ENCODE measurements at regions of chr19 and their contacts with region 1.

Region 1: DNA sequence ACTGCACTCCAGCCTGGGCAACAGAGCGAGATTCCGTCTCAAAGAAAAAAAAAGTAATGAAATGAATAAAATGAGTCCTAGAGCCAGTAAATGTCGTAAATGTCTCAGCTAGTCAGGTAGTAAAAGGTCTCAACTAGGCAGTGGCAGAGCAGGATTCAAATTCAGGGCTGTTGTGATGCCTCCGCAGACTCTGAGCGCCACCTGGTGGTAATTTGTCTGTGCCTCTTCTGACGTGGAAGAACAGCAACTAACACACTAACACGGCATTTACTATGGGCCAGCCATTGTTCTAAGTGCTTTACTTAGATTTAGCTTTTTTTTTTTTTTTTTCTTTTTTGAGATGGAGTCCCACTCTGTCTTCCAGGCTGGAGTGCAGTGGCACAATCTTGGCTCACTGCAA is 30.2 kb downstream of the CYP2F1 start:
- DNase-seq: no peak
- H3K4me3 ChIP-seq: no peak overlapping the region
- H3K27me3 ChIP-seq: no peaks in the 10 kb centered on the region
- CTCF ChIP-seq: peak; percentile 82

Region 2: DNA sequence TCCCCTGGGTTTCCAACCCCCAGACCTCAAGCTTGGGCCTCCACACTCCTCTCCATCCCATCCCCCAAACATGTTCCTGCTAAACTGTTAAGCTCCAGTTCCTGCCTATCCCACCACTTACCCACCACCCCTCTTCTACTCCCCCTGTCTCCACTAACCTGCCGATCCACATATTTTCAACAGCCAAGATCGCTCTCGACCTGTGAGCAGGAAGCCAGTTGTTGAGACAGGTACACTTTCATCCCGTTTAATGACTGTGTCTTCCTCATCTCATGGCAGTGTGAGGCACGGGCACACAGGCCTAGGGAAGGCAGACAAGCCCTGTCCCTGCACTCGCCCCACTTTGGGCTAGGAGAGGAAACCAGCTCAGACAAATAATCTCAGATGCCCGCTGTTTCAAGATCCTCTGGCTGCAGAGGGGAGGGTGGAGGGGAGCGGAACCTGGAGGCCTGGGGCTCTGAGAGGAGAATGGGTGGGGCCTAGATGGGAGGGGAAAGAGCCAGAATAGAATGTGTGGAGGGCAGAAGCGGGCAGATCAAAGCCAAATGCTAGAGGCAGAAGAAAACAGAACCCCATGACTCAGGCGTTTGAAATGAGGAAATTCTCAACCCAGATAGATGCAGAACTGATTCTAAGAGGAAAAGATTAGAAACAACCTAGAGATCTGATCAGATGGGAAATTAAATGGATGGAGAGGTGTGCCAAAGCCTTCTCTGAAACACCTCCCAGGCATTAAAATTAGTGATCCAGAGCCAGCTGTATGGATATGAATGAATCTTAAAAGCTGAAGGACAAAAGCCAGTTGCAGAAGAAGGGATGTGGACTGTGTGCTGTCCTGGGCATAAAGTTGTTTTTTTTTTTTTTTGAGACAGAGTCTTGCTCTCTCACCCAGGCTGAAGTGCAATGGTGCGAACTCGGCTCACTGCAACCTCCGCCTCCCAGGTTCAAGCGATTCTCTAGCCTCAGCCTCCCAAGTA is 31.7 kb after region 1 on chr19:
- CTCF ChIA-PET with region 1: interaction called, 12 read pairs
- POLR2A ChIA-PET with region 1: no interaction called
- DNase-seq: peak; percentile 38
- H3K4me3 ChIP-seq: no peak overlapping the region
- H3K27me3 ChIP-seq: no peaks in the 10 kb centered on the region
- CTCF ChIP-seq: no peak

Region 3: DNA sequence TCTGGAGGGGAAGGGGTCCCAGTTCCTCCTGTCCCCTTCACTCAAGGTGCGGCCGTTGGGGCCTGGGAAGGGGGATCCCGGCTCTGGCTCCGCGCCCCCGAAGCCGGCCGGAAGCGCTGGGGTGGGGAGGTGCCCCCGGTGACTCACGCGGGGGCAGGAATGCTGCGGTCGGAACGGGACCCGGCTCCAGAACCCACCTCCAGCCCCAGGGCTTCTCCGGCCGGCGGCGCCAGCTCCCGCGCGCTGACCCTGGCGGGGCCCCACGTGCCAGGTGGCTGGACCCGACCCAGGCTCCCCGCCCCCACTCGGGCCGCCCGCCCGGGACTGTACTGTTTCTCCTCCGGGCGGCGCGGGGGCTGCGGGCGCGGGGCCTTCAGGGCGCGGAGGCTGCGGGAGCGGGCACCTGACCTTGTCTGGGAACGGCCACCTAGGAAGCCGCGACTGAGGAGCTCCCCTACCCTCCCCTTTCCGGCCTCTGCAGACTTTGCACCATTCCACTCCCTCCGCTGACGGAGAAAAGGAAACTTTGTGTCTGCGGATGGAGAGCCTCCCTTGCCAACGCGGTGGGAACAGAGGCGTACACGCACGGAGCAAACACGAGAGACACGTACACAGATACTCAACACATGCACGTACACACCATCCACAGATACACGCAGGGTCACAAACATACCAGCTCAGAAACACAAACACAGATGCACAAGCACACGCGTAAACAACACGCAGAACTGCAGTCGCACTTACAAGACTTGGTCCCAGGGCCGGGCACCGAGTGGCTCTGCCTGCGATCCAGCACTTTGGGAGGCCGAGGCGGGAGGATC is 81.9 kb after region 1 on chr19:
- CTCF ChIA-PET with region 1: no interaction called
- POLR2A ChIA-PET with region 1: no interaction called
- DNase-seq: peak; percentile 26
- H3K4me3 ChIP-seq: peak overlapping the region; percentile 31
- H3K27me3 ChIP-seq: no peaks in the 10 kb centered on the region
- CTCF ChIP-seq: no peak

Measured in BJ (cell line).